ENCODE measurements at regions of chr12 and their contacts with region 1.

Region 1: DNA sequence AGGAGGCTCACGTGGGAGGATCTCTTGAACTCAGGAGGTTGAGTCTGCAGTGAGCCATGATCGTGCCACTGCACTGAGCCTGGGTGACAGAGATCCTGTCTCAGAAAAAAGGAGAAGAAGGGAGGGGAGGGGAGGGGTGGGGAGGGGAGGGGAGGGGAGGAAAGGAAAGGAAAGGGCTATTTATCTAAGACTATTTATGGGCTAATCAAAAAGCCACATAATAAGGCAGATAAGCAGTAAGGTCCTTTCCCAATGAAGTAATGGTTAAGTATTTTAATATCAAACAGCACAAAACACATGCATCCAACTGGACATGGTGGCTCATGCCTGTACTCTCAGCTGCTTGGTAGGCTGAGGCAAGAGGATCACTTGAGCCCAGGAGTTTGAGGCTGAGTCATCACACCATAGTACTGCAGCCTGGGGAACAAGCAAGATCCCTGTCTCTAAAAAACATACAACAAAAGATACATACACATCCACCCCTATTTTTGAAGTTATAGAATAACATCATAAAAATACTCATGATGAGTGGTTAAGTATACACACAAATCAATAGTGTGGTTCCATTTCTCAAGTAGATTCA is 9.7 kb downstream of the PAWR start:
- DNase-seq: peak; percentile 34
- H3K4me3 Mint-ChIP-seq: no peak overlapping the region
- H3K27ac Mint-ChIP-seq: peak overlapping the region; percentile 45
- H3K4me1 Mint-ChIP-seq: peaks cover 66% of the 10 kb centered on the region
- H3K27me3 Mint-ChIP-seq: no peaks in the 10 kb centered on the region
- CTCF ChIP-seq: no peak

Region 2: DNA sequence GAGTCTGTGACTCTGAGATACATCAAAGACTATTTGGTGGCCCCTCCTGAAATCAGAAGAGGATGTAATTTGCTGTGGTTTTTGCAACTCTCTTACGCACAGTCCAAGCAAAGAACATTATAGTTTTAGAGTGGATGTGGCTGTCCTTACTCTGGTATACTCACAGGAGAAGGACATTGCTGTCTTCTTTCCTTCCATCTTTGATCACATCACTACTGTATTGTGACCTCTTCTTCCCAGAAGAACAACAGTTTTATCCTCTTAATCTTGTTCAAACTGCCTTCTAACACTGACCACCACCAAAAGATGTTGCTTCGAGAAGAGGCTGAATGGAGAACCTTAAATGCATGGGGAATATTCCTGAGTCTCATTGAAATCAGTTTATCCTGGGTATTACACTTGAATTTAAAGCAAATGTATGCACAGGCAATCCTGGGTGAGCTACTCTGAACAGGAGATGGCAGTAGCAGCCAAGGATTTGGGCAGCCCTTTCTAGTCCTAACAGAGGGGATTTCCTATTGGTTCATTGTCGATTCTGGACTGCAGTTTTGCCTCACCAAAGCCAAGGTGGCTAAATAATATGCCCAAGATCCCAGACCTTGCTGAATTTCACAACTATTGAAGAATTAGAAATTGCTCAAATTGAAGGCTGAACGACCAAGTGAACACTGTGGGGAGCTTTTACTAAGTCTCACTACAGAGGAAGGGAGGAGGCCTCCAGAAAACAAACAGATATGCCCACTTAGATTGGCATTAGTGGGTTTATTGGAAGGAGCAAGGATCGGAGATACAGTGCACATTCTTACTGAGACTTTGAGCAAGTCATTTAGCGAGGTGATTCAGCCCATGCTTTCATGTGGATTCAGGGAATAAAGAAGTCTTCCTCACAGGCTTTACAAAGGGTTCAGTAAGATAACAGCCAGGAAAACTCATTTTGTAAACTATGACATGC is 273.2 kb before region 1 on chr12:
- CTCF ChIA-PET with region 1: no interaction called
- intact Hi-C with region 1: no loop called
- DNase-seq: peak; percentile 82
- H3K4me3 Mint-ChIP-seq: peak overlapping the region; percentile 29
- H3K27ac Mint-ChIP-seq: peak overlapping the region; percentile 48
- H3K4me1 Mint-ChIP-seq: peaks cover 30% of the 10 kb centered on the region
- H3K27me3 Mint-ChIP-seq: no peaks in the 10 kb centered on the region
- CTCF ChIP-seq: peak; percentile 62

Region 3: DNA sequence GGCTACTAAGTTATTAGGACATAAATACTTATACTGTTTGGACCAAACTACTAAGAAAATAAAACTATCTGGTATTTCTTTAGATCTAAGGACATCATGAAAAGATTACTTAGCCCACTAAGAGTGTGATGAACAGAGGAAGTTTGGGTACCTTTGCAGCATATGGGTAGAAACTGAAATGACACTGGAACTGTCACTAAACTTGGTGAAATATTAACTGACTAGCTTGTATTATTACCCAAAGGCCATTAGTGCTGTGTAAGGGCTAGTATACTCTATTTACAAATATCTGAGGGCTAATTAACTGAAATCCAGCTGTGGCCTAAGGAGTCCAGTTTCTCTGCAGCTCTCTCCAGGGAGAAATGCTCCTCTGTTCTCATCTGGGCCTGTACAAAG is 35.9 kb before region 1 on chr12:
- CTCF ChIA-PET with region 1: no interaction called
- intact Hi-C with region 1: loop called (anchors 5 kb)
- DNase-seq: no peak
- H3K4me3 Mint-ChIP-seq: no peak overlapping the region
- H3K27ac Mint-ChIP-seq: no peak overlapping the region
- H3K4me1 Mint-ChIP-seq: peaks cover 46% of the 10 kb centered on the region
- H3K27me3 Mint-ChIP-seq: no peaks in the 10 kb centered on the region
- CTCF ChIP-seq: no peak